Activated CD4-positive, alpha-beta memory T cell treated with anti-CD3 and anti-CD28 coated beads for 36 hours (primary cell): ENCODE measurements at regions of chr13 and their contacts with region 1.

Region 1: GRCh38 chr13:45047394-45048310 is 58.3 kb downstream of the GPALPP1 start:
- DNase-seq: peak; percentile 88
- H3K4me3 Mint-ChIP-seq: peak overlapping the region; percentile 70
- H3K27ac Mint-ChIP-seq: no peak overlapping the region
- H3K4me1 Mint-ChIP-seq: peaks cover 15% of the 10 kb centered on the region
- H3K27me3 Mint-ChIP-seq: peaks cover 36% of the 10 kb centered on the region

Region 2: GRCh38 chr13:44801990-44802389 is 245.7 kb before region 1 on chr13:
- CTCF ChIA-PET with region 1: no interaction called
- POLR2A ChIA-PET with region 1: no interaction called
- intact Hi-C with region 1: no loop called
- DNase-seq: no peak
- H3K4me3 Mint-ChIP-seq: no peak overlapping the region
- H3K27ac Mint-ChIP-seq: no peak overlapping the region
- H3K4me1 Mint-ChIP-seq: no peaks in the 10 kb centered on the region
- H3K27me3 Mint-ChIP-seq: peaks cover 4% of the 10 kb centered on the region

Region 3: GRCh38 chr13:45280751-45281634 is 233.3 kb after region 1 on chr13:
- CTCF ChIA-PET with region 1: interaction called, 106 read pairs
- POLR2A ChIA-PET with region 1: interaction called, 3 read pairs
- intact Hi-C with region 1: loop called (anchors 1 kb)
- DNase-seq: peak; percentile 75
- H3K4me3 Mint-ChIP-seq: no peak overlapping the region
- H3K27ac Mint-ChIP-seq: no peak overlapping the region
- H3K4me1 Mint-ChIP-seq: no peaks in the 10 kb centered on the region
- H3K27me3 Mint-ChIP-seq: no peaks in the 10 kb centered on the region

Region 4: DNA sequence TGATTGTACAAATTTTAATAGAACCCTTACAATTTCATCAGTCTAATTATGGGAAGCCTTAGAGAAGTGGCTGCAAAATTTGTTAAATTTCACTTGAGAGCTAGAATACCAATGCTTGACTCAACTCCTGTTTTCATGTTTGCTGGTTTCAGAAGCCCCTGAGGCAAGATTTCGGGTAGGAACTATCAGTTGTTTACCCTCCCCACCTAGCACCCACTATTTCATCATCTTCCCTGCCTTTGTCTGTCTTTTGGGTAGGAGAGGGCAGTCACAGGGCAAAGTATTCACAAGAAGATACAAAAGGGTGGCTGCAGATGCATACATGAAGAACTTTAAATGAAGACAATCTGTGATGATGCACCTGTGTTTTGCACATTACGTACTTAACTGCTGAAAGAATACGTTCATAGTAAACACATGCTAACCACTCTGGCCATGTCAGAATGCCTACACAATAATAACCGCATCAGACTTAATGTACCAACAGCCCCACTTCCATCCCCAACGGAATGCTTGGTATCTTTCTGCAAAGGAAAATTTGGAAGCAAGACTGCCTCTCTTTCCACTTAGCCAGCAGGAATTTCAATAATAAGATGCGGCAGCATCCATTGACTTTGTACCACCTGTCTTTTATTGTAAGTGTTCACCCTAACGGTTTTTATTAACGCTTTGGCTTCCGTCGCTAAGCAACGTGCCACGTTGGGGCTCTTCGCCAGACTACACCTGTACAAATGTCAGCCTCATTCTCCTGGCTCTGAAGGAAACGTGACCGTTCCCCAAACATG is 262.9 kb after region 1 on chr13:
- CTCF ChIA-PET with region 1: interaction called, 114 read pairs
- POLR2A ChIA-PET with region 1: no interaction called
- intact Hi-C with region 1: loop called (anchors 1 kb)
- DNase-seq: no peak
- H3K4me3 Mint-ChIP-seq: peak overlapping the region; percentile 69
- H3K27ac Mint-ChIP-seq: no peak overlapping the region
- H3K4me1 Mint-ChIP-seq: peaks cover 17% of the 10 kb centered on the region
- H3K27me3 Mint-ChIP-seq: peaks cover 6% of the 10 kb centered on the region

Region 5: GRCh38 chr13:45393941-45394570 is 346.4 kb after region 1 on chr13:
- CTCF ChIA-PET with region 1: interaction called, 6 read pairs
- POLR2A ChIA-PET with region 1: no interaction called
- intact Hi-C with region 1: loop called (anchors 5 kb)
- DNase-seq: peak; percentile 47
- H3K4me3 Mint-ChIP-seq: no peak overlapping the region
- H3K27ac Mint-ChIP-seq: no peak overlapping the region
- H3K4me1 Mint-ChIP-seq: peaks cover 46% of the 10 kb centered on the region
- H3K27me3 Mint-ChIP-seq: no peaks in the 10 kb centered on the region

Region 6: DNA sequence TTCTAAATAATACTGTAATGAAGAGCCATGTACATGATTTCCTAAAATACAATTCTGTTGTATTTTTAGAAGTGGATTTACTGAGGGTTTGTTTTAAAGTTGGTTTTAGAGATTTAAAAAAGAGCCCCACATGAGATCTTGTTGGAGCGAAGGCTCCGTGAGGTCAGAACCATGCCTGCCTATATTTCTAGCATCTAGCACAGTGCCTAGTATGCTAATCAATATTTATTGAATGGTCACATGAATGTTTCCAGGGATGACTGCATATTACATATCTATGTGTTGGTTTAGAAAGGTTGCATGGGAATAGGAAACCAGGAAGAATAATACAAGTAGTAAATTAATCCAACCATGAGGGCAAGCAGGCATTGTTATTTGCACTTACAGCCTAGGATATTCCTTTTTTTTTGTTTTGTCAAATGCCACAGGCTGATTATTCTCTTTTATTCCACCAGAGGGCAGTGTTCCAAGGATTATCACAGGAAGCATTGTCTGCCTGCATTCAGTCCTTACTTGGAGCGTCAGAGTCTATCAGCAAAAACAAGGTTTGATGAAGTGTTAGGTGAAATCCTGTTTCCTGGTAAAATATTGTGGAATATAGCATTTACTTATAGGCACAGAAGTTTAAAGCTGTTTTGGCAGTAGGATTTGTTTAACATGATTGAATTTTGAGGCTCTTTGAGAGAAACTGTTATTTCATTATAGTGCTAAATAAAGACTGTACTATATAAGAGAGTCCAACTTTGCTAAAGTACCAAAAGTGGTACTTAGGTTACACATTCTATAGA is 463.9 kb after region 1 on chr13:
- CTCF ChIA-PET with region 1: no interaction called
- POLR2A ChIA-PET with region 1: no interaction called
- intact Hi-C with region 1: loop called (anchors 10 kb)
- DNase-seq: peak; percentile 13
- H3K4me3 Mint-ChIP-seq: no peak overlapping the region
- H3K27ac Mint-ChIP-seq: peak overlapping the region; percentile 70
- H3K4me1 Mint-ChIP-seq: peaks cover 13% of the 10 kb centered on the region
- H3K27me3 Mint-ChIP-seq: no peaks in the 10 kb centered on the region